ENCODE measurements at regions of chr1 and their contacts with region 1.

Region 1: GRCh38 chr1:151377150-151377884 is 4.8 kb upstream of the SELENBP1 start:
- DNase-seq: no peak
- H3K4me3 ChIP-seq: no peak overlapping the region
- H3K27ac ChIP-seq: no peak overlapping the region
- H3K4me1 ChIP-seq: no peaks in the 10 kb centered on the region
- H3K27me3 ChIP-seq: no peaks in the 10 kb centered on the region
- CTCF ChIP-seq: no peak
- POLR2A ChIP-seq: no peak

Region 2: DNA sequence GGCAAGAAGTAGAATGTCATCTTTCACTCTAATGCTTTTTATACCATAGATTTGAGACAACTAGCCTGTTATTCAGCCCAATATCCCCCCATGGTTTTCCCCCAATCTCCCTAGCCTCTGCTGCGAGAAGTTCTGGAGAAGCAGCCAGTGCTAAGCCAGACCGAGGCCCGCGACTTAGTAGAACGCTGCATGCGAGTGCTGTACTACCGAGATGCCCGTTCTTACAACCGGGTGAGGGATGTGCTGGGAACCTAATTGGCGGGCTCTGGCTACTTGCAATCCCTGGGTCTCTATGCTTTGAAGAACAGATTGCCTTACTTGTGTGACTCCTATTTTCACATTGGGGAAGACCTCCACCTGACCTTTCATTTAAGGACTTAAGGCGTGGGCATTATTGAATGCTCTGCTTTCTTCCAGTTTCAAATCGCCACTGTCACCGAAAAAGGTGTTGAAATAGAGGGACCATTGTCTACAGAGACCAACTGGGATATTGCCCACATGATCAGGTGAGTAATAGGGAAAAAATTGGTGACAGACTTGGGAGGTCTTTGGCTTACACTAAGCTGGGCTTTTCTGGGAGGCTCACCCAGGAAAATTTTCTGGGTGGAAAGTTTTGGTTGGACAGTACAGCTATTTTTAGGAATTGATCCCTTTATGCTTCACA is 23.9 kb after region 1 on chr1:
- intact Hi-C with region 1: no loop called
- DNase-seq: no peak
- H3K4me3 ChIP-seq: no peak overlapping the region
- H3K27ac ChIP-seq: peak overlapping the region; percentile 89 to 96
- H3K4me1 ChIP-seq: peaks cover 5 to 9% of the 10 kb centered on the region in 2 donors
- H3K27me3 ChIP-seq: no peaks in the 10 kb centered on the region
- CTCF ChIP-seq: no peak
- POLR2A ChIP-seq: no peak

Region 3: DNA sequence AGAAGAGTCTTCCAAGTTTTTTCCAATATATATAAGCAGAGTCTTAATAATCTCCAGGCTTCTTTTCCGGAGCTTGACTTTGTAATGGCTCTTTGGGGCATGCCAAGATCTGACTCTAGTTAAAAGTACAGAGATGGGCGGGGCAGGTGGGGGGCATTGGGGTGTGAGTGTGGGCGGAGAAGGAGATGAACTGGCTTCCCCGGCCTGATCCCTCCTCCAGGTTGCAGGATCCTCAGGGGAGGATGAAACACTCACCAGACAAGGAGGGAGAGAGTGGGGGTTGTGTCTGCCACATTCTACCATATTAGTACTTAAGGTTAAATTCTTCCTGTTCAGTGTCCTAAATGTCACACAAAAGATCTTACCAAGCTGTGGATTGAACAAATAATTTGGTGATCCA is 593.3 kb after region 1 on chr1:
- intact Hi-C with region 1: loop called (anchors 5 kb)
- DNase-seq: no peak
- H3K4me3 ChIP-seq: no peak overlapping the region
- H3K27ac ChIP-seq: no peak overlapping the region
- H3K4me1 ChIP-seq: no peaks in the 10 kb centered on the region
- H3K27me3 ChIP-seq: no peaks in the 10 kb centered on the region
- CTCF ChIP-seq: no peak
- POLR2A ChIP-seq: no peak